OCI-LY7 (cell line): ENCODE measurements at regions of chr17 and their contacts with region 1.

Region 1: GRCh38 chr17:75400326-75400939 is 5.0 kb downstream of the GRB2 start:
- DNase-seq: no peak
- H3K4me3 ChIP-seq: no peak overlapping the region
- H3K27ac ChIP-seq: no peak overlapping the region
- H3K4me1 ChIP-seq: peaks cover 48% of the 10 kb centered on the region
- CTCF ChIP-seq: no peak

Region 2: DNA sequence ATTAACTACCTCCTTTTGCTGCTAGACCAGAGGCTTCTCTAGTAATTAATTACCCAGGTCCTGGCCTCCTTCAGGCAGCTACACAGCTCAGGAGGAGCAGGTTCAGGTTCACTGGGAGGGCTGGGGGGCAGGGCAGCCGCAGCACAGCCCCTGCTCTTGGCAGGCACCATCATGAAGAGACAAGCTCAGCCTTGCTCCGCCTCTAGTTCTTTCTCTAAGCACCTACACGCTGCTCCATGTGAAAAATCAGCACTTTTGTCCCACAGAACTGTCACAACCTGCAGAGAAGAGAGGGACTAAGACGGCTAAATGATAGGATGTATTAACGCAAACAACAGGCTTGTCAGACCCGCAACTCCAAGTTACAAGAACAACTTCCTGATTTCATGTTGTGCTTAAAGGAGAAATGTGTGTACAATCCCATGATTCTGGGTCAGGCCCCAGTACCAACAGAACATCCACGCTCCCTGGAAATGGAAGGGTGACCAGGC is 48.3 kb before region 1 on chr17:
- CTCF ChIA-PET with region 1: interaction called, 5 read pairs
- POLR2A ChIA-PET with region 1: interaction called, 12 read pairs
- intact Hi-C with region 1: no loop called
- DNase-seq: peak; percentile 68
- H3K4me3 ChIP-seq: peak overlapping the region; percentile 43
- H3K27ac ChIP-seq: peak overlapping the region; percentile 94
- H3K4me1 ChIP-seq: peaks cover 63% of the 10 kb centered on the region
- CTCF ChIP-seq: no peak